ENCODE measurements at regions of chr10 and their contacts with region 1.

Region 1: DNA sequence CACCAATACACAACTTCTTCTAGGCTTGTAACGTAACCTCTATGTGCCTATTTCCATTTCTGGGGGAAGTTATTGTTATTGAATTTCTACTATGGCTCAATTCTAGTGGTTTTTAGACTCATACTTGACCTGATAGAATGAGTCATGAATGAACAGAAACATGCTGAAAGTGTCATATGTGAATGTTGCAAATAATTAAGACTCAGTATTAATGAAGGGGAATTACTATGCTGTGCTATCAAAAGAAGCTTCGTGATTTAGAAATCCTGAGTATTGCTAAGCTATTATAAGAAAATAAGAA is 135.1 kb upstream of the ZWINT start:
- DNase-seq: no peak
- H3K4me3 ChIP-seq: no peak overlapping the region
- H3K27ac ChIP-seq: no peak overlapping the region
- H3K4me1 ChIP-seq: no peaks in the 10 kb centered on the region
- H3K27me3 ChIP-seq: no peaks in the 10 kb centered on the region
- CTCF ChIP-seq: no peak

Region 2: GRCh38 chr10:56469482-56469881 is 26.7 kb before region 1 on chr10:
- CTCF ChIA-PET with region 1: no interaction called
- POLR2A ChIA-PET with region 1: no interaction called
- intact Hi-C with region 1: no loop called
- DNase-seq: no peak
- H3K4me3 ChIP-seq: no peak overlapping the region
- H3K27ac ChIP-seq: no peak overlapping the region
- H3K4me1 ChIP-seq: no peaks in the 10 kb centered on the region
- H3K27me3 ChIP-seq: no peaks in the 10 kb centered on the region
- CTCF ChIP-seq: no peak

Region 3: GRCh38 chr10:56481521-56482091 is 14.5 kb before region 1 on chr10:
- CTCF ChIA-PET with region 1: no interaction called
- POLR2A ChIA-PET with region 1: no interaction called
- intact Hi-C with region 1: loop called (anchors 2 kb)
- DNase-seq: no peak
- H3K4me3 ChIP-seq: no peak overlapping the region
- H3K27ac ChIP-seq: no peak overlapping the region
- H3K4me1 ChIP-seq: no peaks in the 10 kb centered on the region
- H3K27me3 ChIP-seq: no peaks in the 10 kb centered on the region
- CTCF ChIP-seq: no peak

Measured in PC-9 (cell line).